ENCODE measurements at regions of chr6 and their contacts with region 1.

Region 1: GRCh38 chr6:137218917-137219663 is at the start of gene IFNGR1:
- DNase-seq: peak; percentile 95
- ATAC-seq: peak; percentile 80 to 83
- H3K4me3 ChIP-seq: peak within 1 kb of the TSS; percentile 89 to 93 (median 90)
- H3K27ac ChIP-seq: peak within 1 kb of the TSS; percentile 98 to 99 (median 98)
- H3K4me1 ChIP-seq: peaks cover 63 to 76% of the 10 kb centered on the region in 2 donors
- H3K27me3 ChIP-seq: no peaks in the 10 kb centered on the region
- CTCF ChIP-seq: no peak
- POLR2A ChIP-seq: peak; percentile 99
- total RNA-seq, gene IFNGR1: 54.7 to 97.4 (median 61.1) TPM

Region 2: DNA sequence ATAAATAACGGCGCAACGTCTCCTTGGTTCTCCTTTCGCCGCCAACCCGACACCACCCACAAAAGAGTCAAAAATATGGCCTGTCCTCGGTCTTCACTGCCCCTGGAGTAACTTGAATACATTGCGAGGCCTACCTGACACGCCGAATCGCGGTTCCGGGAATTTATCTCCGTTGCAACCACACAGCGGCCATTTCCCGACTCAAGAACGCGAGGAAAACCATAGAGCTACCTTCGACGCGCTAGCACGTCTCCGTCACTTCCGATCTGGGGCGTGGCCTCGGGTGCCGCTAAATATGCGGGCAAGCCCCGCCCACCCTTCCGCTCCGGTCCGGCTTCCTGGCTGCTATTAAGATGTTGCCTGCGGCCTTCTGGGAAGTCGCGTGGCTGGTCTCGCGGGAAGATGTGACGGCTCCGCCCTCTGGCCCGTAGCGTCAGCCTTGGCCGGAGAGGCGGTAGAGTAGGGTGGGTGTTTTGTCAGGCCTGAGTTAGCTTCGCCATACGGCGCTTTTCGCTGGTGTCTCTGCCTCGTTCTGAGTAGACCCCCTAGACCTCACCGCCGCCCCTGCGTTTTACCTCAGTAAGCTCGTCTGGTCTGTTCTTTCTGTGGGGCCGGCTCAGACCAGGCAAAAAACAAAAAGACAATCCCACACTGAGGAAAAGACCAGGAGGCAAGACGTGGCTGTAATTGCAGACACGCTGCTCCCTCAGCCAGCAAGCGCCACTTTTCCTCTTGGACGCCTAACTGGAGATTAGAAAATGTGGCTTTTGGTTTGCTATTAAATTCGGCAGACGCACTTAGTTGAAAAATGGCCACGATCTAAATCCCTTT is 929.3 kb before region 1 on chr6 and contains the start of gene BCLAF1:
- in situ Hi-C with region 1: loop called in 3 of 4 experiments (anchors 25 kb)
- intact Hi-C with region 1: loop called (anchors 5 kb)
- DNase-seq: peak; percentile 99 to 100
- ATAC-seq: peak; percentile 85 to 91
- H3K4me3 ChIP-seq: peak within 1 kb of the TSS; percentile 86 to 100 (median 96)
- H3K27ac ChIP-seq: peak within 1 kb of the TSS; percentile 99 to 100 (median 100)
- H3K4me1 ChIP-seq: peaks cover 44 to 48% of the 10 kb centered on the region in 2 donors
- H3K27me3 ChIP-seq: no peaks in the 10 kb centered on the region
- CTCF ChIP-seq: peak in 1 of 5 experiments; percentile 6
- POLR2A ChIP-seq: peak; percentile 98
- total RNA-seq, gene BCLAF1: 27.3 to 83.0 (median 61.8) TPM

Region 3: GRCh38 chr6:136582711-136583471 is 636.2 kb before region 1 on chr6:
- in situ Hi-C with region 1: no loop called
- intact Hi-C with region 1: loop called (anchors 10 kb)
- DNase-seq: no peak
- ATAC-seq: peak; percentile 50 to 69
- H3K4me3 ChIP-seq: no peak overlapping the region
- H3K27ac ChIP-seq: peak overlapping the region in 2 of 4 donors; percentile 9 to 53
- H3K4me1 ChIP-seq: peaks cover 30 to 38% of the 10 kb centered on the region in 2 donors
- H3K27me3 ChIP-seq: no peaks in the 10 kb centered on the region
- CTCF ChIP-seq: peak; percentile 41 to 62 (median 45)
- POLR2A ChIP-seq: no peak

Region 4: GRCh38 chr6:136822376-136823127 is 396.5 kb before region 1 on chr6 and contains the start of gene PEX7:
- in situ Hi-C with region 1: no loop called
- intact Hi-C with region 1: loop called (anchors 10 kb)
- DNase-seq: peak; percentile 86
- ATAC-seq: peak; percentile 96 to 97
- H3K4me3 ChIP-seq: peak within 1 kb of the TSS; percentile 67 to 77 (median 72)
- H3K27ac ChIP-seq: peak within 1 kb of the TSS; percentile 76 to 92 (median 91)
- H3K4me1 ChIP-seq: peaks cover 20 to 27% of the 10 kb centered on the region in 2 donors
- H3K27me3 ChIP-seq: no peaks in the 10 kb centered on the region
- CTCF ChIP-seq: peak; percentile 56 to 79 (median 63)
- POLR2A ChIP-seq: peak; percentile 59 to 62
- total RNA-seq, gene PEX7: 0.32 to 10.6 (median 6.0) TPM

Region 5: GRCh38 chr6:137866914-137867684 is 648.0 kb after region 1 on chr6 and contains the start of gene TNFAIP3:
- in situ Hi-C with region 1: no loop called
- intact Hi-C with region 1: loop called (anchors 10 kb)
- DNase-seq: peak; percentile 86 to 91
- ATAC-seq: peak; percentile 89 to 90
- H3K4me3 ChIP-seq: peak within 1 kb of the TSS; percentile 67 to 96 (median 86)
- H3K27ac ChIP-seq: peak within 1 kb of the TSS; percentile 85 to 88 (median 86)
- H3K4me1 ChIP-seq: peaks cover 20 to 36% of the 10 kb centered on the region in 2 donors
- H3K27me3 ChIP-seq: no peaks in the 10 kb centered on the region
- CTCF ChIP-seq: peak; percentile 71 to 97 (median 92)
- POLR2A ChIP-seq: peak; percentile 51 to 79
- total RNA-seq, gene TNFAIP3: 2.6 to 7.1 (median 4.7) TPM

Region 6: DNA sequence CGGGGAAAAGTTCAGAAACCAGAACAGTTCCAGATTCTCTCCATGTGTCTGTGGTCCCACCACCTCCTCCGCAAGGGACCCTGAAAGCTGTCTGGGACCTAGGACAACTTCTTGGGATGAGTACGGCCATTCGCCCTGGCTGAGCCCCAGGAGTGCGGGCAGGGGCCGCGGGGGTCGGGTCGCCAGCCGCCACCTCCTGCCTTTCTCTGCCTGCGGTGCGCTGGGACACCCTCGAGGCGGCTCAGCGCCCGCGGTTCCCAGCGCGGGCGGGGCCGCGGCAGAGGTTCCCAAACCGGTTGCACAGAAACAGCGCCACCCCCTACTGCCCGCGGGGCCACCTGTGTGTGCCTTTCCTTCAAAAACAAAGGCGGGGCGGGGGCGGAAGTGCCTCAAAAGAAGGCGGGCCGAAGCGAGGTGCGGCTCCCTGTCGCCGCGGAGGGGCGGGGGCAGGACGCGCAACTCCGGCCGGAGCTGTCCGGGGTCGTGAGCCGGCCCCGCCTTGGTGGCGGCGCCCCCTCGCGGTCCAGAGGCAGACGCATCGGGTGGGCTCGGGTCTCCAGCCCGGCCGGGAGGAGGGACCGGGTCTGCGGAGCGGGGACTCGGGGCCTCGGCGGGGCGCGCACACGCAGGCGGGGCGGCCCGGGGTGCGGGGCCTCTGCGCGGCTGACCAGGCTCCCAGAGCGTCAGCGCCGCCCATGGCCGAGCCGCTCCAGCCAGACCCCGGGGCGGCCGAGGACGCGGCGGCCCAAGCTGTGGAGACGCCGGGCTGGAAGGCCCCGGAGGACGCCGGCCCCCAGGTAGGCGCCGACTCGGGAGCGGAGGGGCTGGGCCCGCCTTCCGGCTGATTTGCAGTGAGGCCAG is 1184.9 kb after region 1 on chr6 and contains the start of gene HEBP2:
- in situ Hi-C with region 1: no loop called
- intact Hi-C with region 1: loop called (anchors 2 kb)
- DNase-seq: peak; percentile 95 to 96
- ATAC-seq: peak; percentile 89 to 93
- H3K4me3 ChIP-seq: peak within 1 kb of the TSS; percentile 65 to 92 (median 84)
- H3K27ac ChIP-seq: peak within 1 kb of the TSS; percentile 92 to 97 (median 94)
- H3K4me1 ChIP-seq: peaks cover 8 to 9% of the 10 kb centered on the region in 2 donors
- H3K27me3 ChIP-seq: no peaks in the 10 kb centered on the region
- CTCF ChIP-seq: peak in 4 of 5 experiments; percentile 39 to 79 (median 78)
- POLR2A ChIP-seq: peak; percentile 81 to 91
- total RNA-seq, gene HEBP2: 60.3 to 81.5 (median 74.8) TPM